Activated T-helper 1 cell treated with anti-CD3 and anti-CD28 coated beads, Interleukin-12 subunit alpha, Interleukin-12 subunit beta, Interleukin-2, Interleukin-4 antibody, amounts not matched to agents 30 ng/mL and 10 ng/mL and 1 ng/mL, durations not matched to agents 14 hours and 24 hours and 36 hours (primary cell): ENCODE measurements at regions of chr14 and their contacts with region 1.

Region 1: DNA sequence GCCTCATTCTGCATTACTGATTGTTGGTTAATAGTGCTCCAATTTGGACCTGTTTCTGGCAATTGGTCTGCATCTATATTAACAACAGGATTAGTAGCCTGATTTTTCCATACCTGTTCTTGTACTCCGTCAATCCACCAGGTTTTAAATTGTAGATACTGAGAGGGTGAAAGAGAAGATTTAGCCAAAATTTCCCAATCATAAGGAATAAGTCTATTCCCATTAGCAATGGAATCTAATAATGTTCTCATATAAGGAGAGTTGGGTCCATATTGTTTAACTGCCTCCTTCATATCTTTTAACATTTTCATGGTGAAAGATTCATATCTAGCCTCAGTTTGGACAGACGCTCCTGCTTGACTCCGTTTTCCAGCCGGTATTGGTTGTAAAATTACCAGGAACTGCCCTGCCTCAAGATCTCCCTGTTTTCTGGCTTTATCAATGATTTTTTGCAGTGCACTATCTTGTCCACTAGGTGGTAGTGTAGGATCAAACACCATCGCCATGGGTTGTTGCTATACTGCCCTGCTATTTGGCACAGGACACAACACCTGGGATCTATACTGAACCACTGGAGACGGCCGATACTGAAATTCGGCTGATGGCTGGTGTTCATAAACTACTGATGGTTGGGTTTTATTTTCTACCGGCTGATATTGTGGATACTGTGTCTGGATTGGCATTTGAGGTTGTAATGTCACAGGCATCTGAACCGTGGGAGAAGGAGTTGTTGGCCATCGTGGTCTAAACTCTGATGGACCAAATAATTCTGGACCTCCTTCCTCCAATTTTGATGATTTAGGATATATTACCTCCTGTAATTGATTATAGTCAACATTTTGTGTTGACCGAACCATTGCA is 25.2 kb downstream of the DHRS4L2 start:
- DNase-seq: peak; percentile 57
- H3K4me3 Mint-ChIP-seq: no peak overlapping the region
- H3K27ac Mint-ChIP-seq: no peak overlapping the region
- H3K4me1 Mint-ChIP-seq: peaks cover 23% of the 10 kb centered on the region
- H3K27me3 Mint-ChIP-seq: peaks cover 7% of the 10 kb centered on the region

Region 2: GRCh38 chr14:23877111-23877510 is 136.8 kb before region 1 on chr14:
- intact Hi-C with region 1: no loop called
- DNase-seq: no peak
- H3K4me3 Mint-ChIP-seq: no peak overlapping the region
- H3K27ac Mint-ChIP-seq: peak overlapping the region; percentile 60
- H3K4me1 Mint-ChIP-seq: no peaks in the 10 kb centered on the region
- H3K27me3 Mint-ChIP-seq: peaks cover 4% of the 10 kb centered on the region

Region 3: GRCh38 chr14:23984891-23985602 is 28.8 kb before region 1 on chr14:
- intact Hi-C with region 1: loop called (anchors 1 kb)
- DNase-seq: no peak
- H3K4me3 Mint-ChIP-seq: no peak overlapping the region
- H3K27ac Mint-ChIP-seq: no peak overlapping the region
- H3K4me1 Mint-ChIP-seq: peaks cover 25% of the 10 kb centered on the region
- H3K27me3 Mint-ChIP-seq: no peaks in the 10 kb centered on the region

Region 4: GRCh38 chr14:24036169-24036962 is 22.5 kb after region 1 on chr14:
- intact Hi-C with region 1: loop called (anchors 1 kb)
- DNase-seq: peak; percentile 70
- H3K4me3 Mint-ChIP-seq: peak overlapping the region; percentile 88
- H3K27ac Mint-ChIP-seq: peak overlapping the region; percentile 73
- H3K4me1 Mint-ChIP-seq: peaks cover 6% of the 10 kb centered on the region
- H3K27me3 Mint-ChIP-seq: peaks cover 7% of the 10 kb centered on the region

Region 5: GRCh38 chr14:24051789-24052655 is 38.1 kb after region 1 on chr14 and contains the start of gene CARMIL3:
- intact Hi-C with region 1: loop called (anchors 1 kb)
- DNase-seq: peak; percentile 67
- H3K4me3 Mint-ChIP-seq: peak within 1 kb of the TSS; percentile 85
- H3K27ac Mint-ChIP-seq: peak within 1 kb of the TSS; percentile 76
- H3K4me1 Mint-ChIP-seq: peaks cover 22% of the 10 kb centered on the region
- H3K27me3 Mint-ChIP-seq: peaks cover 17% of the 10 kb centered on the region
- total RNA-seq, gene CARMIL3: 3.0 and 3.4 TPM in 2 replicates

Region 6: GRCh38 chr14:24058260-24058950 is 44.5 kb after region 1 on chr14:
- intact Hi-C with region 1: loop called (anchors 1 kb)
- DNase-seq: peak; percentile 24
- H3K4me3 Mint-ChIP-seq: no peak overlapping the region
- H3K27ac Mint-ChIP-seq: peak overlapping the region; percentile 65
- H3K4me1 Mint-ChIP-seq: peaks cover 13% of the 10 kb centered on the region
- H3K27me3 Mint-ChIP-seq: peaks cover 3% of the 10 kb centered on the region

Region 7: GRCh38 chr14:24108336-24108874 is 94.5 kb after region 1 on chr14:
- intact Hi-C with region 1: loop called (anchors 1 kb)
- DNase-seq: no peak
- H3K4me3 Mint-ChIP-seq: peak overlapping the region; percentile 24
- H3K27ac Mint-ChIP-seq: peak overlapping the region; percentile 95
- H3K4me1 Mint-ChIP-seq: peaks cover 34% of the 10 kb centered on the region
- H3K27me3 Mint-ChIP-seq: no peaks in the 10 kb centered on the region

Region 8: GRCh38 chr14:24289649-24290249 is 275.9 kb after region 1 on chr14:
- intact Hi-C with region 1: no loop called
- DNase-seq: peak; percentile 44
- H3K4me3 Mint-ChIP-seq: no peak overlapping the region
- H3K27ac Mint-ChIP-seq: no peak overlapping the region
- H3K4me1 Mint-ChIP-seq: peaks cover 25% of the 10 kb centered on the region
- H3K27me3 Mint-ChIP-seq: peaks cover 14% of the 10 kb centered on the region